Dorsolateral prefrontal cortex (tissue), 120 donors: ENCODE measurements at regions of chr5 and their contacts with region 1.

Region 1: GRCh38 chr5:8842971-8843551 is 702.8 kb downstream of the SEMA5A start:
- DNase-seq: peak in 9 of 10 donors; percentile 50 to 77 (median 72)
- H3K4me3 ChIP-seq: peak overlapping the region in 3 of 59 donors; percentile 6 to 16 (median 13)
- H3K27ac ChIP-seq: peak overlapping the region in 58 of 59 donors; percentile 2 to 99 (median 82)
- H3K27me3 ChIP-seq: no peaks in the 10 kb centered on the region
- CTCF ChIP-seq: peak; percentile 9 to 86 (median 60)

Region 2: DNA sequence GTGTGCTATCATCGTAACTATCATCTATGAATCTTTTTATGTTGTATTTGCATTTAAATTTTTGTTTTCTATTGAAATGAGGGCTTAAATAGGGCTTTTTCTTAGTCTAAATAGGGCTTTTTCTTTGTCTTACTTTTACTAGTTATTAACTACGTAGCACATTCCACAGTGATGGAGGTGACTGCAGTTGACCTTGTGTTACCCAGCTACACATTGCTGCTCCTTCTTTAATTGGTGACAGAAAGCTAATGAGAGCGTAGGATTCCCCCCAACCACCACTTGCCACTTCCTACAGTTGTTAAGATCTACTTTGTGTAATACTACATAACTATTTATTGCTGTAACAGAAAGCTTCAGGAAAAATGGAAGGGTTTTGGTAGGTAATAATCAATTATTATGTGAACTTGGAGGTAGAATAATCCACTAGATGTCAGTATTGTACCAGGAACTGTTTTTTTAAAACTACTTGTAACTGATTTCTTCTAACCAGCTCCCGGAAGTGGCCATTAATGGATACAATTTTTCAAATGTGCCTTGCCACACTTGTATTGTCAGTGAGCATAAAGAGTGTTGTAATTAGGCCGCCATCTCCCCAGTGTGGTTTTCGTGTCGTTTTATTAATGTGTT is 956.1 kb before region 1 on chr5:
- intact Hi-C with region 1: loop called in 1 of 2 experiments (anchors 5 kb)
- DNase-seq: no peak
- H3K4me3 ChIP-seq: peak overlapping the region in 2 of 59 donors; percentile 11 to 34
- H3K27ac ChIP-seq: peak overlapping the region in 43 of 59 donors; percentile 1 to 99 (median 67)
- H3K27me3 ChIP-seq: no peaks in the 10 kb centered on the region
- CTCF ChIP-seq: peak; percentile 36 to 91 (median 68)

Region 3: DNA sequence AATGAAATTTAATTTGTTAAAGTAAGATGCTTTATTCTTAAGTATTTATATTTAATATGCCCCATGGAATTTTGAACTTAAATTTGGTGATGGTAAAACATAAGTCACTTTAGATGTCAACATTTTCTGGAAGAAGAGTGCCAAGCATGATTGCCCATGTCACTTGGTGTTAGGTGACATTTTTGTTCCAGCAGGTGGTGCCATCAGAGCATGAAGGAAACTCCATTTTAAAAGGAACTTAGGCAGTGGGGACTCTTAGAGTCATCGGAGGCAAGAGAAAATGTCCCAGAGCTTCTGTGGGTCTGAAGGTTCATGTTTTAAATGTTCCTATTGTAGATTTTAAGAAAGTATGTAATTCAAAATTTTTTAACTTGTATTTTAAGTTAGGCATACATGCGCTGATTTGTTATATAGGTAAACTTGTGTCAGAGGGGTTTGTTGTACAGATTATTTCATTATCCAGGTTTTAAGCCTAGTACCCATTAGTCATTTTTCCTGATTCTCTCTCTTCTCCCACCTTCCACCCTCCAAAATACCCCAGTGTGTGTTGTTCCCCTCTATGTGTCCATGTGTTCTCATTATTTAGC is 86.5 kb before region 1 on chr5:
- intact Hi-C with region 1: loop called (anchors 2 to 5 kb)
- DNase-seq: peak in 4 of 10 donors; percentile 14 to 72 (median 51)
- H3K4me3 ChIP-seq: no peak overlapping the region
- H3K27ac ChIP-seq: no peak overlapping the region
- H3K27me3 ChIP-seq: no peaks in the 10 kb centered on the region
- CTCF ChIP-seq: peak in 55 of 56 donors; percentile 48 to 91 (median 71)

Region 4: GRCh38 chr5:8908055-8908683 is 65.1 kb after region 1 on chr5:
- intact Hi-C with region 1: no loop called
- DNase-seq: no peak
- H3K4me3 ChIP-seq: no peak overlapping the region
- H3K27ac ChIP-seq: no peak overlapping the region
- H3K27me3 ChIP-seq: no peaks in the 10 kb centered on the region
- CTCF ChIP-seq: peak in 53 of 56 donors; percentile 24 to 64 (median 48)

Region 5: DNA sequence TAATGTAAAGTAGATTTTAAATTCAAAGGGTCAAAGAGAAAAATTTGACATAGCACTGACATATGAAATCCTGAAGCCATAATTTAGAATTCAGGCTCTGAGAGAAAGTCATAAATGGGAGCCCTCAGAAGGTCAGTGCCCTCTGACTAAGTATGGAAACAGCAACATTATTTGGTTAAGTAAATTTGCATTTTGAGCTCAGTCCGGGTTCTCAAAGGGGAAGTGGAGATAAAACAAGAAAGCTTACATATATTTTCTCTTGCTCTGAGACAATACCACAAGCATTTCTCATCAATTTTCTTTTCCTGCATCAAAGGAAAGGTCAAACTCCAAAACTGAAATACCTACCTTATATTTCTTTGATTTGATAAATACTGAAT is 354.8 kb after region 1 on chr5:
- intact Hi-C with region 1: loop called in 1 of 2 experiments (anchors 10 kb)
- DNase-seq: no peak
- H3K4me3 ChIP-seq: no peak overlapping the region
- H3K27ac ChIP-seq: no peak overlapping the region
- H3K27me3 ChIP-seq: no peaks in the 10 kb centered on the region
- CTCF ChIP-seq: no peak